Activated CD8-positive, alpha-beta T cell treated with anti-CD3 and anti-CD28 coated beads, Interleukin-2, amount 10 ng/mL, durations not matched to agents 7 days and 5 days (primary cell): ENCODE measurements at regions of chr20 and their contacts with region 1.

Region 1: GRCh38 chr20:10696650-10697049 is 22.9 kb upstream of the JAG1 start:
- DNase-seq: peak; percentile 33
- ATAC-seq: no peak
- H3K4me3 Mint-ChIP-seq: no peak overlapping the region
- H3K27ac Mint-ChIP-seq: no peak overlapping the region
- H3K4me1 Mint-ChIP-seq: no peaks in the 10 kb centered on the region
- H3K27me3 Mint-ChIP-seq: peaks cover 6% of the 10 kb centered on the region

Region 2: GRCh38 chr20:10682939-10683338 is 13.7 kb before region 1 on chr20:
- CTCF ChIA-PET with region 1: interaction called, 10 read pairs
- POLR2A ChIA-PET with region 1: no interaction called
- DNase-seq: no peak
- ATAC-seq: no peak
- H3K4me3 Mint-ChIP-seq: no peak overlapping the region
- H3K27ac Mint-ChIP-seq: no peak overlapping the region
- H3K4me1 Mint-ChIP-seq: no peaks in the 10 kb centered on the region
- H3K27me3 Mint-ChIP-seq: peaks cover 25% of the 10 kb centered on the region

Region 3: DNA sequence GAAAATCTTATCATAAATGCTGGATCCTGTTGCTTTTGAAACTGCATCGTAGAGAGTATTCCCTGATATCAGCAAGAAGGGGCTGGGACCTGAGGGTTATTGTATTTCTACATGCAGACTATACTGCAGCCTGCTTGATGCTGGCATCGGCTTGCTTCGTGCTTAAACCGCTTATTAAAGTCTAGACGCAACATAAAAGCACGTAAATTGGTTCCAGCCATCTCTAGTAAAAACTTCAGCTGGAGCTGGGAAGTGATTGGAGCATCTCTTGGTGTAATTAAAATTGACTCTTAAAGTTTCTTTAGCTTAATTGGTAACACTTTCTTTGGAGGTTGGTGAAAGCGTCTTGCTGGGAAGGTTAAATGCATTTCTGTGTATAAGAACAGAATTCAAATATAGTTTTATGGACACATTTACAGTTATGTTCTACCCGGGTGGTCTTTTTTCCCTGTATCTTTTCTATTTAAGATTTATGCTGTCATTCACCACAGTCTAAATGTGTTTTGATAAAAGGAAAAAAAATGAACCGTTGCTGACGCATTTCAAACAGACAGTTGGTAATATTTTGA is 116.2 kb after region 1 on chr20:
- CTCF ChIA-PET with region 1: no interaction called
- POLR2A ChIA-PET with region 1: no interaction called
- DNase-seq: no peak
- ATAC-seq: no peak
- H3K4me3 Mint-ChIP-seq: no peak overlapping the region
- H3K27ac Mint-ChIP-seq: no peak overlapping the region
- H3K4me1 Mint-ChIP-seq: no peaks in the 10 kb centered on the region
- H3K27me3 Mint-ChIP-seq: no peaks in the 10 kb centered on the region